ENCODE measurements at regions of chr14 and their contacts with region 1.

Region 1: DNA sequence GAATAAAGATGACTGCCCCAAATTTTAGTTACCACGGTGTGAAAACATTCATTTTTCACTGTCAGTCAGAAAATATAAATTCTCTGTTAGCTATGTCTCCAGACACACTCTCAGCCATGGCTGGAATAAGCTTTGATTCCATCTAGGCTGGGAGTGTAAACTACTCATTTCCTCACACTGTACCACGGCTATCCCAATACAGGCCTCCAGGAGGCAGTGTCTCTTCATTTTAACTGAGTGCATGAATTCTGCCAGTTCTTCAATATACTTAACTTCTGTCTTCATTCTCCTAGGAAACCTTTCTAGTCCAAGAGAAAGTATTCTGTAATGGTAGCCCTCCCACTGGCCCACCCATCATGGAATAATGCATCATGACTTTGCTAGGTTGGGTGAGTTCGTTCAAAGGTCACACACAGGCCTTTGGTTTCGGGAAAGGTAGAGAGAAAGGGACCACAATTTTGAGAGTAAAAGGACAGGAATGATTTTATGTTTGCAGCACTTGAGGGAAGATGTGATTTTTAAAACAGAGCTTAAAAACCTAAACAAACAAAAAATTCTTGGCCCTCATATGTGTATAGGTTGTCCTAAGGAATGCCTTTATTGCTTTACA is 381.1 kb downstream of the SEC23A start:
- DNase-seq: peak; percentile 49
- H3K4me3 ChIP-seq: no peak overlapping the region
- CTCF ChIP-seq: peak; percentile 86

Region 2: GRCh38 chr14:38873941-38874612 is 152.2 kb after region 1 on chr14:
- in situ Hi-C with region 1: loop called (anchors 5 kb)
- DNase-seq: no peak
- H3K4me3 ChIP-seq: no peak overlapping the region
- CTCF ChIP-seq: no peak

Region 3: DNA sequence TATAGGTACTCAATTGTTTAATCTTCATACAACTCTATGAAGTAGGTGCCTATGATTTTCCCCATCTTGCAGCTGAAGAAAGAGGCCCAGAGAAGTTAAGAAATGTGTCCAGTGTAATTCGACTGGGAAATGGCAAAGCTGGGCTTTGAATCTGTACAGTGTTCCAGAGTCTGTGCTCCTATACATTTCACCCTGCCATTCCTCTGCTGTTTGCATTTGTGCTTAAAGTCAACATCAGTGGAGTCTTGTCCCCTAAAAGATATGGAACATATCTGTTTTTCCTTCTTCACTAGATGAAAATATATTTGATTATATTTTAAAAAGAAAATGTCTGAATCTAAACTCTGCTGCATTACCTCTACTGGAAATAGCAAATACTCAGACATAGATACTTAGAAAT is 292.5 kb after region 1 on chr14:
- in situ Hi-C with region 1: loop called (anchors 5 kb)
- DNase-seq: no peak
- H3K4me3 ChIP-seq: no peak overlapping the region
- CTCF ChIP-seq: no peak

Measured in astrocyte of the cerebellum (primary cell).